ENCODE measurements at regions of chr15 and their contacts with region 1.

Region 1: GRCh38 chr15:29124581-29125381 is 144.8 kb downstream of the NSMCE3 start:
- DNase-seq: peak; percentile 17
- H3K4me3 ChIP-seq: no peak overlapping the region
- CTCF ChIP-seq: peak; percentile 33

Region 2: DNA sequence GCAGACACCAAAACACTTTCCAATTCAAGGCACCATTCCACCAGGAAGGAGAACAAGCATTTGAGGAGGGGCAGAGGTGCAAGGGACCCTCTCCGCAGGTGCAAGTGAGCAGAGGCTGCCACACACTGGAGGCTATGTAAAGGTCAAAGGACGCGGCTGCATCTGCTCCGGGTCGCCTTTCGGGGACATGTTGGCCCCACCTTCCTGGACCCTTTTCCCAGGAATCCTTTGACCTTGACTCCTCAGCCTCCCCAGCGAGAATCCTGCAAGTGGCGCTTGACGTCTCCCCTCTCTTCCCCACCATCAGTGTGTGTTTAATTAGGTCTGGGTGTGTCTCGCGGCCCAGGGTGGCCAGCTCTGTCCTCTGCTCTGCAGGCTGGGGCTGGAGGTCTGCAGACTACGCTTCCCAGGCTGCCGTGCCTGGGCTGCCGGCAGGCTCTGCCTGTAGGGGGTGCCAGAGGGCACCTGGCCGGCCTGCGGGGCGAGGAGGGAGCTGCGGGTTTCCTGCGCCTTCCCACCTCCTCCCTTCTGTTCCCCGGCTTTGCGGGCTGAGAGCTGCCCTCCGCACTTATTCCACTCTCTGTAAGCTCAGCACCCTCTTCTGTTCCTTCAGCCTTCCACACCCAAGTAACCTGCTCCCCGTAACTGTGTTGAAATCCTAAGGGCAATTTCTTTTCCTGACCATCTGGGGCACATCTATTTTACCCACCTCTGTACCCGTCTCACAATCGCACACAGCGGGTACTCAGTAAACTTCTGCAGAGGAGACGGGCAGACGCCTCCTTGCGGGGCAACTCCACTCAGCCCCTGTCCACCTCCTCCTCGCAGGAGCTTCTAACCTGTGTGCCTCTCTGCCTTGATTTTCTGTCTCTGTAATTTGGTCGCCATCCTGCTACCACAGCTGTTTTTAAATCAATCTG is 15.0 kb after region 1 on chr15:
- CTCF ChIA-PET with region 1: interaction called, 35 read pairs
- POLR2A ChIA-PET with region 1: no interaction called
- DNase-seq: no peak
- H3K4me3 ChIP-seq: peak overlapping the region; percentile 1; the same call in 1 of the 2 replicates
- CTCF ChIP-seq: peak; percentile 97

Region 3: GRCh38 chr15:29233566-29233965 is 108.8 kb after region 1 on chr15:
- CTCF ChIA-PET with region 1: no interaction called
- POLR2A ChIA-PET with region 1: no interaction called
- DNase-seq: no peak
- H3K4me3 ChIP-seq: no peak overlapping the region
- CTCF ChIP-seq: no peak

Measured in AG04449 (cell line).